ENCODE measurements at regions of chr4 and their contacts with region 1.

Region 1: DNA sequence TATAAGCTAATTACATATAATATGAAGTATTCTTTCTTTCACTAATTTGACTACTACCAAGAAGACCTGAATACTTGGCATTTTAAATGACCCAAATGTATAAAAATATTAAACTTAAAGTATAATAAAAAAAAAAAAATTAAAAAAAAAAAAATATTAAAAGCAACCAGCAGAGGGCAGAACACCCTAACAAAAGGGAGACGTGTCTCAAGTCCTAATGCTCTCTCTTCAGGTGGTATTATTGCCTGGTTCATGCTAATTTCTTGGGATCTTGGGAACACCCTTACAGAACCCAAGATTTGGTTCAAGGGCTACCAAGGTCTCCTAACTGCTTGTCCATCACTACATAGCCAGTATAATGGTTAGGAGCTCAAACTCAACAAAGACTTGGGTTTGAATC is 754.8 kb downstream of the RAB28 start:
- DNase-seq: peak in 1 of 35 experiments; percentile 25
- ATAC-seq: no peak
- H3K4me3 ChIP-seq: no peak overlapping the region
- H3K4me3 Mint-ChIP-seq: no peak overlapping the region
- H3K27ac ChIP-seq: no peak overlapping the region
- H3K27ac Mint-ChIP-seq: no peak overlapping the region
- H3K4me1 ChIP-seq: no peaks in the 10 kb centered on the region
- H3K4me1 Mint-ChIP-seq: peaks cover 0 to 1% (median 0%) of the 10 kb centered on the region in 3 donors
- H3K27me3 ChIP-seq: peaks cover 0 to 4% of the 10 kb centered on the region in 2 experiments
- H3K27me3 Mint-ChIP-seq: peaks cover 20% of the 10 kb centered on the region in 2 donors

Region 2: DNA sequence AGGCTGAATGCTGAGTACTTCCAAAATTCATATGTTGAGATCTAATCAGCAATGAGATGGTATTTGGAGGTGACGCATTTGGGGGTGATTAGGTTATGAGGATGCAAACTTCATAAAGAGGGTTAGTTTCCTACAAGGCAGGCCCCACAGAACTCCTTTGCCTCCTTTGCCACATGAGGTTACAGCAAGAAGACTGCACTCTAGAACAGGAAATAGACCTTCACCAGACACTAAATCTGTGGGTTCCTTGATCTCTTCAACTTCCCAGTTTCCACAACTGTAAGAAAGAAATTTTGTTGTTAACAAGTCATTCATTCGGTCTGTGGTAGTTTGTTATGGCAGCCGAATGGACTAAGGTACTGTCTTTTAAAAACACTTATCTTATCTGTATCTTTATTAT is 618.8 kb before region 1 on chr4:
- CTCF ChIA-PET with region 1: no interaction called
- POLR2A ChIA-PET with region 1: no interaction called
- DNase-seq: no peak
- ATAC-seq: no peak
- H3K4me3 ChIP-seq: no peak overlapping the region
- H3K4me3 Mint-ChIP-seq: no peak overlapping the region
- H3K27ac ChIP-seq: no peak overlapping the region
- H3K27ac Mint-ChIP-seq: no peak overlapping the region
- H3K4me1 ChIP-seq: no peaks in the 10 kb centered on the region
- H3K4me1 Mint-ChIP-seq: no peaks in the 10 kb centered on the region
- H3K27me3 ChIP-seq: no peaks in the 10 kb centered on the region
- H3K27me3 Mint-ChIP-seq: no peaks in the 10 kb centered on the region

Region 3: GRCh38 chr4:12949719-12950490 is 220.5 kb after region 1 on chr4:
- CTCF ChIA-PET with region 1: interaction called in 1 of 2 experiments, 14 read pairs
- POLR2A ChIA-PET with region 1: no interaction called
- DNase-seq: no peak
- ATAC-seq: no peak
- H3K4me3 ChIP-seq: no peak overlapping the region
- H3K4me3 Mint-ChIP-seq: no peak overlapping the region
- H3K27ac ChIP-seq: no peak overlapping the region
- H3K27ac Mint-ChIP-seq: no peak overlapping the region
- H3K4me1 ChIP-seq: no peaks in the 10 kb centered on the region
- H3K4me1 Mint-ChIP-seq: no peaks in the 10 kb centered on the region
- H3K27me3 ChIP-seq: no peaks in the 10 kb centered on the region
- H3K27me3 Mint-ChIP-seq: no peaks in the 10 kb centered on the region

Region 4: GRCh38 chr4:13024147-13025105 is 295.0 kb after region 1 on chr4:
- CTCF ChIA-PET with region 1: no interaction called
- POLR2A ChIA-PET with region 1: no interaction called
- DNase-seq: no peak
- ATAC-seq: no peak
- H3K4me3 ChIP-seq: no peak overlapping the region
- H3K4me3 Mint-ChIP-seq: no peak overlapping the region
- H3K27ac ChIP-seq: no peak overlapping the region
- H3K27ac Mint-ChIP-seq: no peak overlapping the region
- H3K4me1 ChIP-seq: no peaks in the 10 kb centered on the region
- H3K4me1 Mint-ChIP-seq: no peaks in the 10 kb centered on the region
- H3K27me3 ChIP-seq: no peaks in the 10 kb centered on the region
- H3K27me3 Mint-ChIP-seq: no peaks in the 10 kb centered on the region

Measured in T-cell (primary cell).